ENCODE measurements at regions of chr11 and their contacts with region 1.

Region 1: GRCh38 chr11:77557554-77557953 is 32.2 kb upstream of the AQP11 start:
- DNase-seq: peak; percentile 12
- H3K4me3 ChIP-seq: no peak overlapping the region
- H3K27ac ChIP-seq: no peak overlapping the region
- H3K4me1 ChIP-seq: peaks cover 17% of the 10 kb centered on the region
- H3K27me3 ChIP-seq: no peaks in the 10 kb centered on the region

Region 2: GRCh38 chr11:77127232-77127911 is 430.2 kb before region 1 on chr11:
- in situ Hi-C with region 1: loop called (anchors 10 kb)
- DNase-seq: peak; percentile 76
- H3K4me3 ChIP-seq: peak overlapping the region; percentile 73
- H3K27ac ChIP-seq: no peak overlapping the region
- H3K4me1 ChIP-seq: peaks cover 4% of the 10 kb centered on the region; the same call in 1 of the 2 replicates
- H3K27me3 ChIP-seq: no peaks in the 10 kb centered on the region

Region 3: DNA sequence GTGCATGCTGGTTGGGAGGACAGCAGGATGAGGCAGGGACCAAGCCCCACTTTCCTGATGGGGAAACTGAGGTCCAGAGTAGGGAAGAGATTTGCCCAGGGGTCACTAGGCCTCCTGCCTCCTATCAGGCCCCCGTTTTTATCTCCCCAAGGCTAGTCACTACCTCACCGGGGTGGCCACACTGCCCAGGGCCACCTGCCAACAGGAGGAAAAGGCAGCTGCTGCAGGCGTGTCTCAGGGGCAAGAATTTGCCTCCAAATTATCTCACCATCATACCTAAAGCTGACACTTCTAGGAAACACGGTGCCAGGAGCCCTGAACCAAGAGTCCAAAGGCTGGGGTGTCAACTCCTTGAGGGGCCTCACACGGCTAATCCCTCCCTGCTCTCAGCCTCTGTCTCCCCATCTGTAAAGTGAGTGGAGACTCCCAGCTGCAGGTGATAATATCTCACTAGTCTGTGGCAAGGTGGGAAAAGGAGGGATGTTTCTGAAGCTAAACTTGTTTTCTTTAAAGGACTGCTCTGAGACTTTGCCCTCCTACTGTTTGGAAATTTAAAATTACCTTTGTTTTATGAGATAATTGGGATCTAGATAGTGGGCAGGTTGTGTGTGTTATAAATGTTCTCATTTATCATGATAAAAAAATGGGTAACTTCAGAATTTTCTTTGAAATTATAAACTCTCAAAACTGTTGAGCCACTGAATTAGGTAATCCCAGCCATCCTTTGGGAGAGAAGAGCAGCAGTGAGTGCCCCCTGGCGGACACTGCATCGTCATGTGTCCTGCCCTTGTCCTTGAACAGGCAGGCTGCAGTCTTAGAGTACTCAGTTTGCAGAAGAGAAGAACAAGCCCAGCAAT is 369.6 kb before region 1 on chr11:
- in situ Hi-C with region 1: loop called (anchors 10 kb)
- DNase-seq: peak; percentile 87
- H3K4me3 ChIP-seq: no peak overlapping the region
- H3K27ac ChIP-seq: no peak overlapping the region
- H3K4me1 ChIP-seq: no peaks in the 10 kb centered on the region
- H3K27me3 ChIP-seq: no peaks in the 10 kb centered on the region